ENCODE measurements at regions of chr22 and their contacts with region 1.

Region 1: GRCh38 chr22:45268958-45269844 is 15.5 kb upstream of the UPK3A start:
- DNase-seq: peak; percentile 94
- ATAC-seq: peak; percentile 80

Region 2: DNA sequence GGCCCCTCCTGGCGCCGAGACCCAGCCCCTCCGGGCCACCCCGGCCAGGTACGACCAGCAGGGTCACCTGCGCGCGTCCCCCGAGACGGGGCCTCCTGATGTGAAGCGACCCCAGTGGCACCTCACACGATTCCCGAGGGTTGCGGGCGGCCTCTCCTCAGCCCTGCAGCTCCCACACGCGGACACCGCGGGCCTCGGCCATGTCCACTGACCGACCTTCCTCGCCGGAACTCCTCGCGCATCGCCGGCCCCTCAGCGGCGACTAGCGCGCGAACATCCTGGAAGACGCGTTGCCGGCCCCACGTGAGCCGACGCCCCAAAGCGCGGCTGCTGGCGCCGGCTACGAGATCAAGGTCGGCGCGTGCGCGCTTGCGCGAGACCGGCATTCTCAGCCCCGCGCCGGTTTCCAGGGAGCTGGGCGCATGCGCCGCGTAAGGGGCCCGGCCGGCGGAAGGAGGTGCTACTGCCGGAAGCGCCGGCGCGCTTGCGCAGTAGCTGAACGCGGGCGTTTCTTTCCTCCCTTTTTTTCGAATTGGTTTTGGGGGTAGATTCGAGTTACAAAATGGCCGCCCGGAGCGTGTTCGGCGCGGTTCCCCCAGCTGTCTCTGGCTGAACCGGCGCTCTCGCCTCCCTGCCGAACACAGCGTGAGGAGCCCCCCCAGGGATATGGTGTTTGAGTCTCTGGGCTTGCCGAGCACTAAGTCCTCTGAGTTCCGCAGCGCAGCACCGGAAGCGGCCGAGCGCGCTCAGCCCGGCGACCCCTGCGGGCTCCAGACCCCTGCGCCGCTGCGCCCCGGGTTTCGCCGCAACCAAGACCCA is 105.5 kb before region 1 on chr22 and contains the start of gene NUP50:
- intact Hi-C with region 1: loop called (anchors 10 kb)
- DNase-seq: peak; percentile 96
- ATAC-seq: peak; percentile 96
- total RNA-seq, gene NUP50: 55.9 TPM

Region 3: DNA sequence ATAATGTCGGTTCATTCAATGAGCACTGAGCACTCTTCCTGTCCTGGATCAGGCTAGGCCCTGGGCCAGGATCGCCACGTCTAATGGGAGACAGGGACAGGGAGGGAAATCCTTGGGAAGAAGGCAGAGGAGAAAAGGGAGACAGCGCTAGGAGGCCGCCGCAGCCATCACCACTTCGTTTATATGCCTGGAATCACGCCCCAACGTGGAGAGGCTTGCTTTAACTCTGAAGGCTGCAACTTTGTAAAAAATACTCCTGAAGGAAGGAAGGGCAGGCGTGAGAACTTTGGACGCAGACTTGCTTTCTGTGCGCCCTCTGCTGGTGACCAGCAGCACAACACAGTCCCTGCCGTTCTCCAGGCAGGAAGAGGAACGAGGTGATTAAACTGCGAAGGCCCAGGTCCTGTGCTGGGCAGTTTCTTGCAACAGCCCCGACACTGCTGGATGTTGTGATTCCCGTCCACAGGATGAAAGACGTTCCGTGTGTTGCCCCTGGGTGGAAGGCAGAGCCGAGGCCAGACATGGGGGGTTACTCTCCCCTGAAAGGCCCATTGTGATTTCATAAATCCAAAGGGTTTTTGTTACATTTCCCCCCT is 166.4 kb after region 1 on chr22:
- intact Hi-C with region 1: loop called (anchors 2 kb)
- DNase-seq: peak; percentile 93
- ATAC-seq: peak; percentile 93

Region 4: DNA sequence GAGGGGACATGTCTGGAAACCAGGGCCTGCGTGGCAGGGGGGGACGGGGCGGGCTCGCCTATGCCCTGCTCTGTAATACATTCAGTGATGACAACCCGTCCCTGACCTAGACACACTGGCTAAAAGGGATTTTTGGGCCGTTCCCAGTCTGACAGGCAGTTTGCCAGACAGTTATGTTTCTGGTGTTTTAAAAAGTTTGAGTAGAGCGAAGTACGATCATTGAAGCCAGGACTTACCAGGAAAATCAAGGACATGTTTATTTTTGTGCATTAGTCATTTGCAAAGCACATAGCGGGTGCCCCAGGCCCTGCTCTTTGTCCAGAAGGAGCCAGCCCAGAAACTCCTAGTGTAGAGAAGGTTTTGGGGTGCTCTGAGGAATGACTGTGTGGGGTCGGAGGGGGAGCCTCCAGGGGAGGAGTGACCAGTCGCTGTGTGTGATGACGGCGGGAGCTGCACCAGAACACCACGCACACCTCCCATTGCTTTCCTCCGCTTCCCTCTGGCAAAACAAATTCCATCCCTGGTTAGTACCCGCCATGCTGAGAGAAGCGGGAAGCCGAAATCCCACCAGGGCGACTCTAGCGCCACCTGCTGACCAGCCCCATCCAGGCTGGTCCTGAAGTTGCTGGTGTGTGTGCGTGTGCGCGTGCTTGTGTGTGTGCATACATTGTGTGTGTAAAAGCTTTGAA is 284.3 kb after region 1 on chr22:
- intact Hi-C with region 1: loop called (anchors 5 kb)
- DNase-seq: peak; percentile 91
- ATAC-seq: peak; percentile 67

Measured in sciatic nerve (tissue), 2 donors.